Activated T-helper 1 cell treated with anti-CD3 and anti-CD28 coated beads, Interleukin-12 subunit alpha, Interleukin-12 subunit beta, Interleukin-2, Interleukin-4 antibody, amounts not matched to agents 30 ng/mL and 10 ng/mL and 1 ng/mL, durations not matched to agents 14 hours and 24 hours and 36 hours (primary cell): ENCODE measurements at regions of chr4 and their contacts with region 1.

Region 1: DNA sequence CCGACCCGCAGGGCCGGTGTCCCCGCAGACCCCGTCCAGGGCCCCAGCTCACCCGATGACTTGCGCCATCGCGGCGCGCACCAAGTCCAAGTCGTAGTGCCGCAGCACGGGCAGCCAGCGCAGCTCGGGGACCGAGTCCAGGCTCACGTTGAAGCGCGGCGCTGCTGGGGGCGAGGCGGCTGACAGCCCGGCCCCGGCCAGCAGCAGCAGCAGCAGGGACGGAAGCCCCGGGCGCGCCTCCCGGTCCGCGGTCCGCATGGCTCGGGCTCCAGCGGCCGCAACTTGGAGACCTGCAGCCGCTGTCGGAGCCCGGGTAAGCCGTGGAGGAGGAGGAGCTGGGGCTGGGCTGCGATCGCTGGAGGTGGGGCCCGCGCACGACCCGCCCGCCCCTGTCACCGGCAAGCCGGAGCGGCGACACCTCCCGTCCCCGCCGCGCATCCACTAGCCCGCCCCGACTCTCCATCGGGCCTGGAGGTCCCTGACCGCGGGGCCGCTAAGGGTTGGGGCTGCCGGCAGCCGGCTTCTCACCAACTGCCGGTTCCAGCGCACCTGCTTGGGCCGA is at the start of gene NAAA:
- DNase-seq: peak; percentile 83
- H3K4me3 Mint-ChIP-seq: peak within 1 kb of the TSS; percentile 98
- H3K27ac Mint-ChIP-seq: peak within 1 kb of the TSS; percentile 96
- H3K4me1 Mint-ChIP-seq: peaks cover 32% of the 10 kb centered on the region
- H3K27me3 Mint-ChIP-seq: no peaks in the 10 kb centered on the region
- total RNA-seq, gene NAAA: 31.3 and 31.8 TPM in 2 replicates

Region 2: DNA sequence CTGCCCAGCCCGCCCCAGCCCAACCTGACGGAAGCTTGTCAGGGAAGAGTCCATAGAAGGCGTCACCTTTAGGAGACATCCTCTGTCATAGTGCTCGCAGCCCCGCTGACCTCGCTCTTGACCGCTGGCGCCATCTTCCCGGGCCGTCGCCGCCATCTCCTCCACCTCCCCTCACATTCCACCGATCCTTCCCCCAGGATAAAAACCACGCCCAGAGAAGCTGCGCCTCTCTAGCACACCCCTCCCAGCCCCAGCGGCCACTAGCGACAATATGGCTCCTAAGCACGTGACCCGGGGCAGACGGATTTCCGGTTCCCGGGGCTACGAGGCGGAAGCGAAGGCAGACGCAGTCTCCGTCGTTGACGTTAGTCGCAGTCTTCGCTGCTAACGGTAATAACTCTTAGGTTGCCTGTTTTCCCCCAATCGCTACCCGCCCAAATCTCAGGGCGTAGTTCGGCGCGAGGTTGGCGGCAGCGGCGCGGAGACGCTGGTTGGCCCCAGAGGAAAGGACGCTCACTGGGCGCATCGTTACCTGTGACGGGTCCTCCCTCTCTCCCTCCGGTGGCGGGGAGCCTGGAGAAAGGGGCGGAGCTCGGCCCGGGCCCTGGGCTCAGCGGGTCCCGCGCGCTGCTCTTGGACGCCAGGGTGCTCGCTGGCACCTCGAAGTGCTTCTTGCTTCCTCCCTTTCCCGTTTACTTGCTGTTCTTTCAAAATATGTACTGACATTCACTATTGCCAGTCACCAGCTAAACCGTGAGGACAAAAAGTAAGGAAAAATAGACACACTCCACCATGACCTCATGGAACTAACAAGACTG is 426.4 kb before region 1 on chr4 and contains the starts of genes RCHY1 and THAP6:
- intact Hi-C with region 1: loop called (anchors 2 kb)
- DNase-seq: peak; percentile 90
- H3K4me3 Mint-ChIP-seq: no peak within 1 kb of the TSS
- H3K27ac Mint-ChIP-seq: peak within 1 kb of the TSS; percentile 100
- H3K4me1 Mint-ChIP-seq: peaks cover 47% of the 10 kb centered on the region
- H3K27me3 Mint-ChIP-seq: no peaks in the 10 kb centered on the region
- total RNA-seq, gene RCHY1: 25.0 and 25.6 TPM in 2 replicates
- total RNA-seq, gene THAP6: 16.3 and 17.3 TPM in 2 replicates

Region 3: DNA sequence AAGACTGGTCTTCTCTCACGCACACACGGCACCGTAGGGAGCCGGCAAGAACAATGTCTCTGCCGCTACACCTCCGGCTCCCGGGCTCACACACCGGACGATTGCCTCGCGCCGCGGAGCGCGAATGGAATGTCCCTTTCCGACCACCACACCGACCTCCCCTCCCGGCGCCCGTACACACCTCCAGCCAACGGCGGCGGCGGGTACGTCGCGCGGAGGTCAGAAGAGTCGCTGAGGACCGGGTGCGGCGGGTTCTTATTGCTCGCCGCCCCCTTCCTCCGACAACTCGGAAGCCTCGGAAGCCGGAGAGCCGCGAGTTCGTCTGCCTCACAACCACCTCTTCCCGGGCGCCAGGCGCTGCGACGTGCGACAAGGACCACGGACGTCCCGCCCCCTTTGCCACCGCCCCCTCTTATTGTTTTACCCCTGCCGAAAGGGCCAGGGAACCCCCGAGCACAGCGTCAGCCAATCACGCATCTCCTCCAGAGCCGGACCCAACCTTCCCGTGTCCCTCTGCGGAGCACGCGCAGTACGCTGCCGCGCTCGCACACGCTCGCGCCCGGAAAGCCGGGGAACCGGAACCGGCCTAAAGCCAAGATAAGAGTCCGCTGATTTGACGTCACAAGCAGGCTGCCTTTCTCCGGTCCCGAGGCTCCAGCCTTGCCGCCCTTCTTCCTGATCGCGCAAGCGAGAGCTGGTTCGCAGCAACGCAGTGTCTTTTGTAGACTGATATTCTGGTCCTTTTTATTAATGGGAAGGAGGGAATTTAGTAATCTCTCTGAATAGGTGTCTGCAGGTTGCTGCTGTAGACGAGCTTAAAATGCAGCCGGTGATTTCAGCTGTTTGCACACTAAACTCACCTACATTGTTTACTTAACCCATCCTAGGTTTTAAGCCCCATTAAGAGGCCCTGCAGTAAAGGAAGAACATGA is 267.5 kb before region 1 on chr4 and contains the start of gene G3BP2:
- intact Hi-C with region 1: loop called (anchors 2 kb)
- DNase-seq: peak; percentile 96
- H3K4me3 Mint-ChIP-seq: peak within 1 kb of the TSS; percentile 96
- H3K27ac Mint-ChIP-seq: peak within 1 kb of the TSS; percentile 98
- H3K4me1 Mint-ChIP-seq: peaks cover 40% of the 10 kb centered on the region
- H3K27me3 Mint-ChIP-seq: no peaks in the 10 kb centered on the region
- total RNA-seq, gene G3BP2: 143 and 144 TPM in 2 replicates

Region 4: GRCh38 chr4:75916091-75916661 is 24.6 kb before region 1 on chr4:
- intact Hi-C with region 1: loop called (anchors 1 kb)
- DNase-seq: peak; percentile 11
- H3K4me3 Mint-ChIP-seq: no peak overlapping the region
- H3K27ac Mint-ChIP-seq: no peak overlapping the region
- H3K4me1 Mint-ChIP-seq: peaks cover 4% of the 10 kb centered on the region
- H3K27me3 Mint-ChIP-seq: no peaks in the 10 kb centered on the region

Region 5: GRCh38 chr4:76148142-76148865 is 207.5 kb after region 1 on chr4 and contains the start of gene NUP54:
- intact Hi-C with region 1: loop called (anchors 1 kb)
- DNase-seq: peak; percentile 94
- H3K4me3 Mint-ChIP-seq: peak within 1 kb of the TSS; percentile 99
- H3K27ac Mint-ChIP-seq: peak within 1 kb of the TSS; percentile 97
- H3K4me1 Mint-ChIP-seq: peaks cover 35% of the 10 kb centered on the region
- H3K27me3 Mint-ChIP-seq: no peaks in the 10 kb centered on the region
- total RNA-seq, gene NUP54: 70.6 and 75.1 TPM in 2 replicates